ENCODE measurements at regions of chr11 and their contacts with region 1.

Region 1: DNA sequence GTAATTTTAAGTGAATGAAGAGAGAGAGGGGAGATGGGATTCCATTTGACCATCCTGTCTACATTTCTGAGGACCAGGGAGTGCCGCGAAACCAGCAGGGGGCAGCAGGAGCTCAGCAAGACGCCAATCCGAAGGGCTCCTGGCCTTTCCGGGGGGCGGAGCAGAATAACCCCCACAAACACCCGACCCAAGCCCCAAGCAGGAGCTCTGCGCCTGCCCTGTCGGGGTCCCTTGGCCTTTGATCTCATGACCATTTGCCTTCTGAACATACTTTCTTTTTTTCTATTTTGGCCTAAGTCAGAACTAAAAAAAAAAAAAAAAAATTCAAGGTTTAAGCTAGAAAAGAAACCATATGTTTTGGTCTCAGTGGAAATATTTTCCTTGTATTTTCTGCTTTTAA is 21.9 kb upstream of the SCN2B start:
- DNase-seq: peak; percentile 91 to 94
- H3K4me3 ChIP-seq: no peak overlapping the region
- H3K4me3 Mint-ChIP-seq: peak overlapping the region; percentile 2
- H3K27ac Mint-ChIP-seq: peak overlapping the region; percentile 36
- H3K4me1 ChIP-seq: peaks cover 85% of the 10 kb centered on the region
- H3K4me1 Mint-ChIP-seq: peaks cover 44% of the 10 kb centered on the region
- H3K27me3 ChIP-seq: no peaks in the 10 kb centered on the region
- H3K27me3 Mint-ChIP-seq: no peaks in the 10 kb centered on the region
- CTCF ChIP-seq: peak; percentile 99

Region 2: GRCh38 chr11:118145285-118146227 is 52.8 kb before region 1 on chr11:
- CTCF ChIA-PET with region 1: interaction called, 5 read pairs
- POLR2A ChIA-PET with region 1: no interaction called
- intact Hi-C with region 1: loop called (anchors 1 kb)
- DNase-seq: peak; percentile 96 to 99
- H3K4me3 ChIP-seq: peak overlapping the region; percentile 84
- H3K4me3 Mint-ChIP-seq: peak overlapping the region; percentile 81
- H3K27ac Mint-ChIP-seq: no peak overlapping the region
- H3K4me1 ChIP-seq: peaks cover 7% of the 10 kb centered on the region
- H3K4me1 Mint-ChIP-seq: peaks cover 17% of the 10 kb centered on the region
- H3K27me3 ChIP-seq: peaks cover 2% of the 10 kb centered on the region
- H3K27me3 Mint-ChIP-seq: peaks cover 13% of the 10 kb centered on the region
- CTCF ChIP-seq: peak; percentile 98 to 99

Region 3: DNA sequence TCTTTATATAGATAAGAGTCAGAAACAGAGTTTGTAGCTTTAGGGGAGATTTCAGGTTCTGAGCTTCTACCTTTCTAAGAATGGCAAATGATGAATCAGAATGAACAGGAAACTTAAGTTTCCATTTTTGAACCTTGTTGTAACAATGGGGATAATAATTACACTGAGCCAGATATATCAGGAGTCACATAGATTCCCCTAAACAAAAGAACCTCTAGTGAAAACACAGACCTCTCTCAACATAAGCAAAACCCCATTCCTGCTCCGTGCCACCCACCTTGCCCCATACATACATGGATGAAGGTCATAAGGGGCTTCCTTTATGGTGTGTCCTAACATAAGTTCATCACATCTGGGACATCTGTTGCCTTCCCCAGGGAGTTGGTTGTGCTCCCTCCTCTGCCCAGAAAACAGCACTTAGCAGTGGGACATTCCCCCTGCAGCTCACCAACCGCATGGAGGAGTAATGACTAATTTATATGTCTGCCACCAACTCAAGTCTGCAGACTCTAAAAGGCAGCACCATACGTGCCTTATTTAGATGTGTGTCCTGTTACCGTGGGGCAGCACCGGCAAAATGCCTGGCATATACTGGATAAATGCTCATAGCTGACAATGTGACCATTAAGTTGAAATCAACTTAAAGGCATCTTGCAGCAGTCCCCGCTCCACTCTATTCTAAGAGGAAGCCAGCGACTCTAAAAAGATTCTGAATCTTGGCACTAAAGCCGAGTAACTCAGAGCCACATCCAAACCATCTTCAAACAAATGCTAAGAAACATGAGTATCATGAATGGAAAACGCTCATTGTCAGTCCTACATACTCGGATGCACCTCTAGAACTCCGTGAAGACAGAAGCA is 18.5 kb after region 1 on chr11:
- CTCF ChIA-PET with region 1: interaction called, 75 read pairs
- POLR2A ChIA-PET with region 1: interaction called, 13 read pairs
- intact Hi-C with region 1: loop called (anchors 1 kb)
- DNase-seq: no peak
- H3K4me3 ChIP-seq: no peak overlapping the region
- H3K4me3 Mint-ChIP-seq: no peak overlapping the region
- H3K27ac Mint-ChIP-seq: peak overlapping the region; percentile 67
- H3K4me1 ChIP-seq: peaks cover 59% of the 10 kb centered on the region
- H3K4me1 Mint-ChIP-seq: peaks cover 42% of the 10 kb centered on the region
- H3K27me3 ChIP-seq: no peaks in the 10 kb centered on the region
- H3K27me3 Mint-ChIP-seq: no peaks in the 10 kb centered on the region
- CTCF ChIP-seq: no peak

Region 4: GRCh38 chr11:118251858-118252652 is 53.7 kb after region 1 on chr11 and contains the start of gene MPZL3:
- CTCF ChIA-PET with region 1: interaction called, 35 read pairs
- POLR2A ChIA-PET with region 1: interaction called, 16 read pairs
- intact Hi-C with region 1: loop called (anchors 1 kb)
- DNase-seq: peak; percentile 97 to 99
- H3K4me3 ChIP-seq: peak within 1 kb of the TSS; percentile 65
- H3K4me3 Mint-ChIP-seq: peak within 1 kb of the TSS; percentile 85
- H3K27ac Mint-ChIP-seq: peak within 1 kb of the TSS; percentile 98
- H3K4me1 ChIP-seq: peaks cover 11% of the 10 kb centered on the region
- H3K4me1 Mint-ChIP-seq: peaks cover 24% of the 10 kb centered on the region
- H3K27me3 ChIP-seq: no peaks in the 10 kb centered on the region
- H3K27me3 Mint-ChIP-seq: no peaks in the 10 kb centered on the region
- CTCF ChIP-seq: peak in 1 of 2 experiments; percentile 20
- total RNA-seq, gene MPZL3: 29.6 and 31.8 TPM in 2 replicates

Region 5: DNA sequence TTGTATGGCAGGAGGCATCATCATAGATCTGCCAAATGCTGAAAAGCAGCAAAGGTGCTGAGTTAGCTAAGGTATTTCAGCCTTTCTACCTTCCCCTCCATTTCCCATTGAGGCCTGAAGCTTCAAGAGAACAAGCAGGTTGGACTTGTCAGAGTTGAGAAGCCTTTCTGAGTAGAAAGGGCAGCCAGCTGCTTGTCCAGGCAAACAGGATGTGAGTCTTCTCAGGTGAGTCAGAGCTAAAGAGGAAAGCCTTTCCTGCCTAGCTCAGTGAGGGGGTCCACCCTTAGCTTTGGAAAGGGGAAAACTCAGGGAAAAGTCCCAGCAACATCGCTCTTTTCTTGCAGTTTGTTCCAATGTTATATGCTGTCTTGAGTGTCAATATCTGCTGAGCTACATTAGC is 78.9 kb after region 1 on chr11:
- CTCF ChIA-PET with region 1: interaction called, 13 read pairs
- POLR2A ChIA-PET with region 1: no interaction called
- intact Hi-C with region 1: no loop called
- DNase-seq: peak in 1 of 2 experiments; percentile 55
- H3K4me3 ChIP-seq: no peak overlapping the region
- H3K4me3 Mint-ChIP-seq: no peak overlapping the region
- H3K27ac Mint-ChIP-seq: no peak overlapping the region
- H3K4me1 ChIP-seq: peaks cover 15% of the 10 kb centered on the region
- H3K4me1 Mint-ChIP-seq: peaks cover 13% of the 10 kb centered on the region
- H3K27me3 ChIP-seq: no peaks in the 10 kb centered on the region
- H3K27me3 Mint-ChIP-seq: no peaks in the 10 kb centered on the region
- CTCF ChIP-seq: no peak

Region 6: GRCh38 chr11:118314988-118315411 is 116.6 kb after region 1 on chr11:
- CTCF ChIA-PET with region 1: interaction called, 8 read pairs
- POLR2A ChIA-PET with region 1: interaction called, 10 read pairs
- intact Hi-C with region 1: loop called (anchors 1 kb)
- DNase-seq: peak; percentile 87 to 93
- H3K4me3 ChIP-seq: peak overlapping the region; percentile 26
- H3K4me3 Mint-ChIP-seq: peak overlapping the region; percentile 68
- H3K27ac Mint-ChIP-seq: peak overlapping the region; percentile 93
- H3K4me1 ChIP-seq: peaks cover 80% of the 10 kb centered on the region
- H3K4me1 Mint-ChIP-seq: peaks cover 65% of the 10 kb centered on the region
- H3K27me3 ChIP-seq: no peaks in the 10 kb centered on the region
- H3K27me3 Mint-ChIP-seq: no peaks in the 10 kb centered on the region
- CTCF ChIP-seq: no peak

Region 7: GRCh38 chr11:118488480-118489109 is 290.2 kb after region 1 on chr11:
- CTCF ChIA-PET with region 1: interaction called, 3 read pairs
- POLR2A ChIA-PET with region 1: no interaction called
- intact Hi-C with region 1: loop called (anchors 5 kb)
- DNase-seq: peak; percentile 76 to 84
- H3K4me3 ChIP-seq: no peak overlapping the region
- H3K4me3 Mint-ChIP-seq: no peak overlapping the region
- H3K27ac Mint-ChIP-seq: no peak overlapping the region
- H3K4me1 ChIP-seq: no peaks in the 10 kb centered on the region
- H3K4me1 Mint-ChIP-seq: no peaks in the 10 kb centered on the region
- H3K27me3 ChIP-seq: no peaks in the 10 kb centered on the region
- H3K27me3 Mint-ChIP-seq: no peaks in the 10 kb centered on the region
- CTCF ChIP-seq: peak; percentile 97

Measured in Caco-2 (cell line).